MCF 10A (cell line): ENCODE measurements at regions of chr7 and their contacts with region 1.

Region 1: DNA sequence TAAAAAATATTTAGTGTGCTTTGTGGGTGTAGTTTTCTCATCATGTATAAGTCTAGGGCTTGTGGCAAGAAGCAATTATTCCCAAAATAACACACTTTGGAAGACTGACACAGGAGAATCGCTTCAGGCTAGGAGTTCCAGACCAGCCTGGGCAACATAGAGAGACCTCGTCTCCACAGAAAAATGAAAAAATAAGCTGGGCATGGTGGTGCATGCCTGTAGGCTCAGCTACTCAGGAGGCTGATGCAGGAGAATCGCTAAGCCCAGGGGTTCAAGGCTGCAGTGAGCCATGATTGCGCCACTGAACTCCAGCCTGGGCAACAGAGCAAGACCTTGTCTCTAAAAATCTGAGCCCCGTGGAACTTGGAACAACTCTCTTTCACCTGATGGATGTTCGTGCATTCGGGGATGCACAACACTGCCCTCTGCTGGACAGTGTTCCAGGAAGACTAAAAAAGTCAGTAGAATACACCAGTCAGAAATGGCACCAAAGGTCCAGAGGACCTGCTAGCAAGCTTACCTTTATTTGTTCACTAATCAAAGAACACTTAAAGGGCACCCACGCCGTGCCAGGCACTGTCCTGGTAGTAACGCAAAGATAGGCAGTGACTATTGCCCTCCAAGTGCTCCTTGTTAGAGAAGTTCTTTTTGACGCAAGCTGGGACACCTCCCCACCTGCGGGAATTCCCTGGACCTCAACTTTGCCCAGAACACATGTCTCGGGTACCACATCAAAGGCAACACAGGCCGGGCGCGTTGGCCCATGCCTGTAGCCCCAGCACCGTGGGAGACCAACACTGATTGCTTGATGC is 81.9 kb upstream of the CALN1 start:
- DNase-seq: peak; percentile 68
- H3K4me3 Mint-ChIP-seq: no peak overlapping the region
- H3K27ac Mint-ChIP-seq: no peak overlapping the region
- H3K4me1 Mint-ChIP-seq: no peaks in the 10 kb centered on the region
- H3K27me3 Mint-ChIP-seq: no peaks in the 10 kb centered on the region
- CTCF ChIP-seq: peak; percentile 68

Region 2: DNA sequence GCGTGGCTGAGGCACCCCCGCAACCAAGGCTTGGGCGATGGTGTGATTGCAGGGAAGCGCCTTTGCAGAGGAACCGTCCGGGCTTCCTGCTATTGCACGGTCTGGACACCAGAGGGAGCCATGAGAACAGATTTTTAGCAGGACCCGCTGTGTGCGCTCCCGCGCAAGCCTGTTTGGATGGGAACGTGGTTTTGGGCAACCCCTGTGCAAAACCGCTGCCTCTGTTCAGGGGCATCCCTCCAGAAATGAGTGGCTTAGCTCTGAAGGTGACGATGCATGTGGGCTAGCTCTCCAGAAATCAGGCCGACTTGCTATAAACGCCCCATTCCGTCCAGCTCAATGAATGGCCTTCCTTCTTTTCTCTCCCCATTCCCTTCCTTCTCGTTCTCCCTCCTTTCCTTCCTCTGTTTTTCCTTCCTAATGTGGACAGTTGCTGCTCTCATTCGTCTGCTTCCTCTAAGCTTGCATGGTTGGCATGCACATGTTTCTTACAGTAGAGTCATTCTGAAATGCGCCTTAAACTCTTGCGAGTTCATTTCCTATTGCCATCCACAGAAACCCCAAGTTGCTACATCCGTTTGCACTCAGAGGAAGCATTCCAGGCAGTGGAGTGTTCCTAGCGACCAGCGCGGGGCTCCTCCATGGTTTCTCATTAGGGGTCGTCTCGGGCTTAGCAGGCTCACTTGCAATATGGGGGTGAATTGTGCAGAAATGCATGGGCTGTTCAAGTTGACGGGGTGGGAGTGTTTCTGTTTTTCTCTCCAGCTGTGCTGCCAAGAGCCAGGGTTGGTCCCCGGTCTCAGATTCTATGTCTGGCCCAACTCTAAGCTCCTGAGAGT is 1664.6 kb before region 1 on chr7:
- CTCF ChIA-PET with region 1: no interaction called
- POLR2A ChIA-PET with region 1: no interaction called
- intact Hi-C with region 1: loop called (anchors 10 kb)
- DNase-seq: peak; percentile 8
- H3K4me3 Mint-ChIP-seq: no peak overlapping the region
- H3K27ac Mint-ChIP-seq: no peak overlapping the region
- H3K4me1 Mint-ChIP-seq: no peaks in the 10 kb centered on the region
- H3K27me3 Mint-ChIP-seq: no peaks in the 10 kb centered on the region
- CTCF ChIP-seq: peak; percentile 88

Region 3: GRCh38 chr7:72176875-72177274 is 317.2 kb before region 1 on chr7:
- CTCF ChIA-PET with region 1: interaction called, 11 read pairs
- POLR2A ChIA-PET with region 1: no interaction called
- intact Hi-C with region 1: no loop called
- DNase-seq: no peak
- H3K4me3 Mint-ChIP-seq: no peak overlapping the region
- H3K27ac Mint-ChIP-seq: no peak overlapping the region
- H3K4me1 Mint-ChIP-seq: no peaks in the 10 kb centered on the region
- H3K27me3 Mint-ChIP-seq: no peaks in the 10 kb centered on the region
- CTCF ChIP-seq: no peak

Region 4: GRCh38 chr7:72217151-72217550 is 276.9 kb before region 1 on chr7:
- CTCF ChIA-PET with region 1: interaction called, 13 read pairs
- POLR2A ChIA-PET with region 1: no interaction called
- intact Hi-C with region 1: no loop called
- DNase-seq: no peak
- H3K4me3 Mint-ChIP-seq: no peak overlapping the region
- H3K27ac Mint-ChIP-seq: peak overlapping the region; percentile 60
- H3K4me1 Mint-ChIP-seq: peaks cover 17% of the 10 kb centered on the region
- H3K27me3 Mint-ChIP-seq: no peaks in the 10 kb centered on the region
- CTCF ChIP-seq: no peak

Region 5: GRCh38 chr7:72230281-72230680 is 263.8 kb before region 1 on chr7:
- CTCF ChIA-PET with region 1: no interaction called
- POLR2A ChIA-PET with region 1: no interaction called
- intact Hi-C with region 1: no loop called
- DNase-seq: no peak
- H3K4me3 Mint-ChIP-seq: no peak overlapping the region
- H3K27ac Mint-ChIP-seq: no peak overlapping the region
- H3K4me1 Mint-ChIP-seq: no peaks in the 10 kb centered on the region
- H3K27me3 Mint-ChIP-seq: no peaks in the 10 kb centered on the region
- CTCF ChIP-seq: no peak

Region 6: GRCh38 chr7:72504061-72504706 is 10.1 kb after region 1 on chr7:
- CTCF ChIA-PET with region 1: interaction called, 30 read pairs
- POLR2A ChIA-PET with region 1: no interaction called
- intact Hi-C with region 1: no loop called
- DNase-seq: peak; percentile 21
- H3K4me3 Mint-ChIP-seq: no peak overlapping the region
- H3K27ac Mint-ChIP-seq: no peak overlapping the region
- H3K4me1 Mint-ChIP-seq: peaks cover 10% of the 10 kb centered on the region
- H3K27me3 Mint-ChIP-seq: no peaks in the 10 kb centered on the region
- CTCF ChIP-seq: no peak